PC-3 (cell line): ENCODE measurements at regions of chr5 and their contacts with region 1.

Region 1: GRCh38 chr5:169296419-169297143 is 4.4 kb downstream of the SLIT3 start:
- DNase-seq: no peak
- ATAC-seq: no peak
- H3K4me3 ChIP-seq: no peak overlapping the region
- H3K27ac ChIP-seq: no peak overlapping the region
- H3K4me1 ChIP-seq: no peaks in the 10 kb centered on the region
- H3K27me3 ChIP-seq: peaks cover 35% of the 10 kb centered on the region
- CTCF ChIP-seq: no peak

Region 2: GRCh38 chr5:169161022-169161680 is 135.4 kb before region 1 on chr5:
- CTCF ChIA-PET with region 1: no interaction called
- POLR2A ChIA-PET with region 1: no interaction called
- intact Hi-C with region 1: no loop called
- DNase-seq: peak; percentile 87
- ATAC-seq: peak; percentile 47
- H3K4me3 ChIP-seq: no peak overlapping the region
- H3K27ac ChIP-seq: peak overlapping the region; percentile 83
- H3K4me1 ChIP-seq: peaks cover 44% of the 10 kb centered on the region
- H3K27me3 ChIP-seq: no peaks in the 10 kb centered on the region
- CTCF ChIP-seq: no peak

Region 3: DNA sequence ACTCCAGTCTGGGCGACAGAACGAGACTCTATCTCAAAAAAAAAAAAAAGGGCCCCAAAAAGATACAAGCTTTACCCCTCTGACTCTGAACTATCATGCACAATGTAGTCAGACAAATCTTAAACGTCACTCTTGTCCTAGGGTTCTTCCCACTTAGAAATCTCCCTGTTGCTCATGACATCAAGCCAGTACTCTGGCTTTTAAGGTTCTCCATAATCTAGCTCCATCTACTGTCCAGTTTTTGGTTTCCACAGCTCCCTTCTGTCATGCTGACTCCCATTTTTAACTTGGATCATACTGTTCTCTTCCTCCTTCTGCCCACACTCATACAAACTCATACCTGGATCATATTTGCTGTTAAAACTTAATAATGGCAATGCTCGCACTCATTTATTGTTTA is 1855.8 kb after region 1 on chr5:
- CTCF ChIA-PET with region 1: no interaction called
- POLR2A ChIA-PET with region 1: no interaction called
- intact Hi-C with region 1: loop called (anchors 10 kb)
- DNase-seq: peak; percentile 76
- ATAC-seq: peak; percentile 94
- H3K4me3 ChIP-seq: no peak overlapping the region
- H3K27ac ChIP-seq: no peak overlapping the region
- H3K4me1 ChIP-seq: no peaks in the 10 kb centered on the region
- H3K27me3 ChIP-seq: no peaks in the 10 kb centered on the region
- CTCF ChIP-seq: peak; percentile 75